ENCODE measurements at regions of chr11 and their contacts with region 1.

Region 1: GRCh38 chr11:18768472-18768901 is 23.1 kb downstream of the PTPN5 start:
- DNase-seq: no peak
- H3K4me3 Mint-ChIP-seq: no peak overlapping the region
- H3K27ac Mint-ChIP-seq: no peak overlapping the region
- H3K4me1 Mint-ChIP-seq: peaks cover 8% of the 10 kb centered on the region
- H3K27me3 Mint-ChIP-seq: no peaks in the 10 kb centered on the region

Region 2: DNA sequence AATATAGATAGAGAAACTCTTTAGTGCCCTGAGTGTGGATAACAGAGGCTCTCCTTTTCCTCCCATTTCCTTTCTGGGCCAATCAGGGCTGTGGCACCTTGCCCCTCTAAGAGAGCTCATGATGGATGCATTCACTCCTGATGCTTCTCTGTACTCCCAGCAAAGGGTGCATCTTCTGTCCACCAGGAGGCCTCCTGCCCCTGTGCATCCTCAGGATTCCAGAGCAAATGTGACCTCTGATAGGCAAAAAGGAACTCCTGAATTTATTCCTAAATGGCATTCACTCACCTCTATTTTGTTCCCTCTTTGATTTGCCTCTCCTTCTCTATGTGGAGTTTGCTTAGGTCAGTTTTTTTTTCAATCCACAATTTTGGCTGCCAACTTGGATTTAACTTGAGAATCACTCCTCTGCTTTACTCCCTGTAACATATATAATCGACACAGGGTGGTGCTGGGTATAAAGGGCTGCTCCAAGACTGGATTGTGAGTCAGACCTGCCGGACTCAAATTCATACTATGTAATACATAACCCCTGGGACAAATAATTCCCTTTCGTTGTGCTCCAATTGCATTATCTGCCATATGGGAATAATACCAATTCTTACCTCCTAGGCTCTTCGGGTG is 597.0 kb before region 1 on chr11:
- CTCF ChIA-PET with region 1: no interaction called
- intact Hi-C with region 1: loop called (anchors 1 kb)
- DNase-seq: peak; percentile 52
- H3K4me3 Mint-ChIP-seq: no peak overlapping the region
- H3K27ac Mint-ChIP-seq: no peak overlapping the region
- H3K4me1 Mint-ChIP-seq: no peaks in the 10 kb centered on the region
- H3K27me3 Mint-ChIP-seq: peaks cover 11% of the 10 kb centered on the region

Region 3: DNA sequence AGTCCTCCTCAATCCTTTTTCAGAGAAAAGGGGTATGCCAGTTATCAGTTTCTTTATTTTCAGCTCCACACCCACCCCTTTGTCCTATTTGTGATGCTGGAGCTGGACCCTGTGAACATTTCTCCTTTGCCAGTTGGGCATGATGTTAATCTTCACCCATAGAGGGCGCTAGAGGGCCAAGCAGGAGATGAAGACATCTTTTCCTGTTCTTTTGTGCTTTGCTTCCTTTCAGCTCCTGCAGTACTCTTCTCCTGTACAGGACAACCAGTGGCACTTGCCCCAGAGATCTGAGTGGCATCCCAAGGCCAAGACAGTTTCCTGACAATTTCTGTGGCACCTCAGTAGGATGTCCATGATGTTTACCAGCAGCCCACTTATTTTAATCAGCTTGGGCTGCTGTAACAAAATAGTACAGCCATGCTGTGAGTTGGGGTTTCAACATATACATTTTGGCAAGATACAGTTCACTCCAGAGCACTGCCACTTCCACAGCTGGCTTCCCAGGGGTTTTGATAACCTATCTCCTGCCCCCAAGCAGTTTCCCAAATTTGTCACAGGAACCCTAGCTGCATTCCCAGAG is 524.6 kb before region 1 on chr11:
- CTCF ChIA-PET with region 1: interaction called, 6 read pairs
- intact Hi-C with region 1: loop called (anchors 1 kb)
- DNase-seq: peak; percentile 81
- H3K4me3 Mint-ChIP-seq: no peak overlapping the region
- H3K27ac Mint-ChIP-seq: no peak overlapping the region
- H3K4me1 Mint-ChIP-seq: peaks cover 6% of the 10 kb centered on the region
- H3K27me3 Mint-ChIP-seq: peaks cover 4% of the 10 kb centered on the region

Region 4: DNA sequence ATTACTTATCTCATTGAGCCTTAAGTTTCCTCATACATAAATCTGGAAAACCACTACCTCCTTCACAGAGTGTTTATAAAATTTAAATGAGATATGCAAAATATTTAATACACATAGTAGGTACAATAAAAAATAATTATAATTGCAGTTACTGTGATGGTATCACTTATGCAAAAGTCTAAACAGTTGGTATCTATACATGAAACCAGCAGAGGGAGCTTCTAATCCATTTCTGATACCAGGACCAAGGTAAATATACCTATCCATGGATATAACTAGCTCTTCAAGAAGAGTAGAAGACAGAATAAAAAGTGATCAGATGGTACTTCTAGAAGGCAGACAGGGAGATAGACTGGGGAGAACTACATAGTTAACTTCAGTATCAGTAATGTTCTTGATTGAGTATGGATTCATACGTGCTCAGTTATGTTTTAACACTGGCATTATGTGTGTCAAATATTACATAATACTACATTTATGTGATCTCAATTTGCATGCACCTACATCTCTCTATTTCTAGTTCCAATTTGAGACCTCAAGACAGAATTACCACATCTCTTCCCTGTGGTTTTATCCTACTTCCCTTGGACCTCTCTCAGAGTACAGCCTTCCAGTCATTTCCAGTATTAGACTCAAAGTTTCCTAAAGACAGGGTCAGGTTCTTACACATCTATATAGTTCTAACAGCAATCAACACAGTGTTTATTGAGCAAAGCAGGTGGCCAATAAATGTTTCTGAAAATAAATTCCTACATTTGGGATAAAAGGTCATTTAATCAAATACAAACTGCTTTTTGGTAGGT is 228.1 kb before region 1 on chr11:
- CTCF ChIA-PET with region 1: interaction called, 7 read pairs
- intact Hi-C with region 1: loop called (anchors 1 kb)
- DNase-seq: no peak
- H3K4me3 Mint-ChIP-seq: no peak overlapping the region
- H3K27ac Mint-ChIP-seq: no peak overlapping the region
- H3K4me1 Mint-ChIP-seq: peaks cover 6% of the 10 kb centered on the region
- H3K27me3 Mint-ChIP-seq: no peaks in the 10 kb centered on the region

Region 5: GRCh38 chr11:18650859-18651557 is 117.5 kb before region 1 on chr11:
- CTCF ChIA-PET with region 1: no interaction called
- intact Hi-C with region 1: loop called (anchors 1 kb)
- DNase-seq: peak; percentile 65
- H3K4me3 Mint-ChIP-seq: no peak overlapping the region
- H3K27ac Mint-ChIP-seq: no peak overlapping the region
- H3K4me1 Mint-ChIP-seq: no peaks in the 10 kb centered on the region
- H3K27me3 Mint-ChIP-seq: no peaks in the 10 kb centered on the region

Region 6: DNA sequence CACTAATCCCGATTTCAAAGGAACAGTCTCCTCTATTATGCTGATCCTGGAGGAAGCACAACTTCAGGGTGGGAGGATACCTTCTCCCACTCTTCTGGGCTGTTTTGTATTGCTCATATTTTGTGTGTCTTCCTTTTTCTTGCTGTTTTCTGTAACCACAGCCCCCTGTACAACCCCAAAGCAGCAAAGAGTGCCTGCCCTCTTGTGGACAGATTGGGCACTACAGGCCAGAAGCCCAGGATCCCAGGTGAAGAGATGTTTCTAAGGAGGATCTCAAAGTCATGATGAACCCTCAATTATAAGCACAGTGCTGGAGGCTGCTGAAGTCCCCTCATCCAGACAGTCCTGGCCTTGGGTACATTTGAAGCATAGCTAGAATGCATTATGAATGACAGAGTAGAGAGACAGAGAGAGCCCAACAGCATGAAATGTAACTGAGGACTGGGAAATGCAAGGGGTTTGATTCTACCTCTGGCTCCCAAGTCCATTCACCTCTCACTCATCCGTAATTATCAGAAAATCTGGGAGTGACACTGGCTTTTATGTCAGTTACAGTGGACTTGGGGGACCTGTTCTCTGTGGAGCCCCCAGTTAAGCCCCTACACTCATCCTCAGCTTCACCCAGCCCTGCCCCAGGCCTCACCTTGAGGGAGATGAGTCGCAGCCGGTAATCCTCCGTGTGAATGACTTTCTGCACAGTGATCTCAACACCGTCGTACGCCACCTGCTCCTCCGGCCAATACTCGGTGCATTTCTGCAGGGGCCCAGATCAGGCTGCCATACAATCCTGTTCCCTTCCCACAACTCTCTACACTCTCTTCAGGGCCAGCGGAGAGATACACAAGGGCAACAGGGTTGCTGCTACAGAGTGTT is 36.3 kb before region 1 on chr11:
- CTCF ChIA-PET with region 1: interaction called, 14 read pairs
- intact Hi-C with region 1: loop called (anchors 1 kb)
- DNase-seq: peak; percentile 79
- H3K4me3 Mint-ChIP-seq: no peak overlapping the region
- H3K27ac Mint-ChIP-seq: no peak overlapping the region
- H3K4me1 Mint-ChIP-seq: peaks cover 3% of the 10 kb centered on the region
- H3K27me3 Mint-ChIP-seq: no peaks in the 10 kb centered on the region

Region 7: DNA sequence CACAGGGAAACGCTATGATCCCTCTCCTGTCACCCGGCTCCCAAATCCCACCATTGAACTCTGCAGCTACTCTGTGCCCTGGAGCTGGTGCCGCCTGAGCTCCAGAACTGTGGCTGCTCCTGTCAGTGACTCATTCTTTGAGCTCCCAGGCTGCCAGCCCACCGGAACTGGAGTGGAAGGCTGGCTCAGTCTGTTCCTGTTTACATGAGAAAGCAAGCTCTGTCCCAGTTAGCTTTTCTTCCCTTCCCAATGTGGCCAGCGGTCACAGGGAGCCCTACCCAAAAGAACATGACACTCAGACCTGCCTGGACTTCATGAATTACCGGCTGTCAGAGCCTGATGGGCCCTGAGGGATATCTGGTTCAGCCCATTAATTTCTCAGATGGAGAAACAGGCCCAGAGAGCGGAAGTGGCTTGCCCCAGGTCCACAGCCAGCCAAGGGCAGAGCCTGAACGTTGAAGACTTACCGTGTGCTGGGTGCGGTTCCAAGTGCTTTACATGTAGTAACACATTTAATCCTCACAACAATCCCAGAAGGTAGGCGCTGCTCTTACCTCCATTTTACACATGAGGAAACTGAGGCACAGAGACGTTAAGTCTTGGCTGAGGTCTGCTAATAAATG is 18.7 kb before region 1 on chr11:
- CTCF ChIA-PET with region 1: interaction called, 21 read pairs
- intact Hi-C with region 1: no loop called
- DNase-seq: no peak
- H3K4me3 Mint-ChIP-seq: no peak overlapping the region
- H3K27ac Mint-ChIP-seq: no peak overlapping the region
- H3K4me1 Mint-ChIP-seq: no peaks in the 10 kb centered on the region
- H3K27me3 Mint-ChIP-seq: no peaks in the 10 kb centered on the region

Region 8: GRCh38 chr11:19326499-19326898 is 558.0 kb after region 1 on chr11:
- CTCF ChIA-PET with region 1: no interaction called
- intact Hi-C with region 1: no loop called
- DNase-seq: no peak
- H3K4me3 Mint-ChIP-seq: no peak overlapping the region
- H3K27ac Mint-ChIP-seq: no peak overlapping the region
- H3K4me1 Mint-ChIP-seq: no peaks in the 10 kb centered on the region
- H3K27me3 Mint-ChIP-seq: peaks cover 15% of the 10 kb centered on the region

Measured in activated naive CD4-positive, alpha-beta T cell treated with anti-CD3 and anti-CD28 coated beads for 36 hours (primary cell).